ENCODE measurements at regions of chr16 and their contacts with region 1.

Region 1: GRCh38 chr16:23640931-23641765 is at the starts of genes DCTN5 and PALB2:
- DNase-seq: peak; percentile 80 to 97
- H3K4me3 ChIP-seq: peak within 1 kb of the TSS; percentile 64 to 99
- H3K27ac ChIP-seq: peak within 1 kb of the TSS; percentile 72 to 86
- H3K4me1 ChIP-seq: peaks cover 5 to 18% of the 10 kb centered on the region in 2 donors
- H3K27me3 ChIP-seq: no peaks in the 10 kb centered on the region
- CTCF ChIP-seq: no peak
- total RNA-seq, gene DCTN5: 16.7 TPM
- total RNA-seq, gene PALB2: 2.1 TPM

Region 2: GRCh38 chr16:23452572-23453337 is 188.4 kb before region 1 on chr16 and contains the start of gene COG7:
- intact Hi-C with region 1: loop called (anchors 10 kb)
- DNase-seq: peak; percentile 39 to 89
- H3K4me3 ChIP-seq: peak within 1 kb of the TSS; percentile 89 to 94
- H3K27ac ChIP-seq: peak within 1 kb of the TSS; percentile 61 to 72
- H3K4me1 ChIP-seq: peaks cover 6 to 14% of the 10 kb centered on the region in 2 donors
- H3K27me3 ChIP-seq: no peaks in the 10 kb centered on the region
- CTCF ChIP-seq: no peak
- total RNA-seq, gene COG7: 25.9 TPM

Region 3: DNA sequence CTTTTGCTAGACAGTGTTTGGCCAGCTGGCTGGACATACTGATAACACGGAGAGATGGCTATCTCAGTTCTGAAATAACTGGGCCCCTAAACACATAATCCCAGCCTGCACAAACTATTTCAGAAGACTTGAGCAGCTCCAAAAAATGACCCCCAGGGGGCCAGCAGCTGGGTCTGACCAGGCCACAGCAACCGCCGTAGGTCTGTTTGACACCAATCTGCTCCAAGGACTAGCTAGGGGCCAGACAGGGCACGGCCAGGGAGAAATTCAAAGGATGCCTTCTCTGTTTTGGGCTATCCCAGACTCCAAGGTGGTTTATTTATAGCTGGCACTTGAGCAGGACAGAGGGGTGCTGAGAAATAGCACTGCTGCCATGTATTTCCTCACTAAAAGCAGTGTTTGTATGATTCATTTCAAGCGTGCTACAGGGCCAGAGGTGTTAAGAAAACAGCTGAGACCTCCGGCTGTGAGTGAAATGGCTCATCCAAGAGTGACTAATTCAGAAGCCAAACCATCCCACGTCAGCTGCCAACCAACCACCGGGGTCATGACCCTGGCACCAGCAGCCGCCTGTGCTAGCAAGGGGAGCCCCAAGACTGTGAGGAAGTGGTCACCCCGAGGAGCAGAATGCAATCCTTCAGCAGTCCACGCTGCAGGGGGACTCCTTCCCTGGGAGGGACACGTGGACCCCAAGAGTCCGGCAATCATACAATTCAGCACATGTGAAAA is 136.5 kb before region 1 on chr16:
- intact Hi-C with region 1: loop called (anchors 5 kb)
- DNase-seq: peak; percentile 75 to 83
- H3K4me3 ChIP-seq: no peak overlapping the region
- H3K27ac ChIP-seq: peak overlapping the region; percentile 74 to 76
- H3K4me1 ChIP-seq: peaks cover 6 to 23% of the 10 kb centered on the region in 2 donors
- H3K27me3 ChIP-seq: no peaks in the 10 kb centered on the region
- CTCF ChIP-seq: no peak

Region 4: GRCh38 chr16:23595951-23596720 is 45.0 kb before region 1 on chr16 and contains the start of gene NDUFAB1:
- intact Hi-C with region 1: loop called (anchors 1 kb)
- DNase-seq: peak; percentile 38 to 94
- H3K4me3 ChIP-seq: peak within 1 kb of the TSS; percentile 95 to 97
- H3K27ac ChIP-seq: peak within 1 kb of the TSS; percentile 85 to 87
- H3K4me1 ChIP-seq: peaks cover 7 to 14% of the 10 kb centered on the region in 2 donors
- H3K27me3 ChIP-seq: no peaks in the 10 kb centered on the region
- CTCF ChIP-seq: peak; percentile 97 to 100 (median 99)
- total RNA-seq, gene NDUFAB1: 71.4 TPM

Measured in ascending aorta (tissue), 2 donors.